A673 (cell line): ENCODE measurements at regions of chr11 and their contacts with region 1.

Region 1: GRCh38 chr11:101323997-101324396 is 194.4 kb upstream of the PGR start:
- DNase-seq: peak; percentile 9
- H3K4me3 ChIP-seq: no peak overlapping the region
- H3K27ac ChIP-seq: no peak overlapping the region
- H3K4me1 ChIP-seq: no peaks in the 10 kb centered on the region
- H3K27me3 ChIP-seq: no peaks in the 10 kb centered on the region
- CTCF ChIP-seq: peak; percentile 37; the same call in 1 of the 2 replicates

Region 2: GRCh38 chr11:100980156-100980555 is 343.8 kb before region 1 on chr11:
- CTCF ChIA-PET with region 1: interaction called, 4 read pairs
- POLR2A ChIA-PET with region 1: no interaction called
- intact Hi-C with region 1: loop called (anchors 10 kb)
- DNase-seq: peak; percentile 34
- H3K4me3 ChIP-seq: no peak overlapping the region
- H3K27ac ChIP-seq: no peak overlapping the region
- H3K4me1 ChIP-seq: no peaks in the 10 kb centered on the region
- H3K27me3 ChIP-seq: no peaks in the 10 kb centered on the region
- CTCF ChIP-seq: peak; percentile 58

Region 3: DNA sequence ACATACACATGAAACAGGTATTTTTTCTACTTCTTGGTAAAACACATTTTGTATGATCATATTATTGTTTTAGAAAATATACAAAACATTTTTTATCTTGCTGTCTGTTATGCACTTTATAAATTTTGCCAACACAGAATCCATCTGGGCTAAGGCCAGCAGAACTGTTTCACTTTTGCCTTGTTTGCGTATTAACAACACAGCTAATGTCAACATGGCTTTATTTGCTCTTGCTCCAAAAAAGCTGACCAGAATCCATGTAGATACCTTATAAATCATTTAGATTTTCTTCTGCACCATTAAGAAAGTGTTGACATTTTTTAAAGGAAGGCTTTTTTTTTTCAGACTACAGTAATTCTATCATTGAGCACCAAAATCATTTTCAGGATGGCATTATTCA is 136.2 kb before region 1 on chr11:
- CTCF ChIA-PET with region 1: no interaction called
- POLR2A ChIA-PET with region 1: no interaction called
- intact Hi-C with region 1: no loop called
- DNase-seq: no peak
- H3K4me3 ChIP-seq: no peak overlapping the region
- H3K27ac ChIP-seq: no peak overlapping the region
- H3K4me1 ChIP-seq: no peaks in the 10 kb centered on the region
- H3K27me3 ChIP-seq: no peaks in the 10 kb centered on the region
- CTCF ChIP-seq: no peak

Region 4: DNA sequence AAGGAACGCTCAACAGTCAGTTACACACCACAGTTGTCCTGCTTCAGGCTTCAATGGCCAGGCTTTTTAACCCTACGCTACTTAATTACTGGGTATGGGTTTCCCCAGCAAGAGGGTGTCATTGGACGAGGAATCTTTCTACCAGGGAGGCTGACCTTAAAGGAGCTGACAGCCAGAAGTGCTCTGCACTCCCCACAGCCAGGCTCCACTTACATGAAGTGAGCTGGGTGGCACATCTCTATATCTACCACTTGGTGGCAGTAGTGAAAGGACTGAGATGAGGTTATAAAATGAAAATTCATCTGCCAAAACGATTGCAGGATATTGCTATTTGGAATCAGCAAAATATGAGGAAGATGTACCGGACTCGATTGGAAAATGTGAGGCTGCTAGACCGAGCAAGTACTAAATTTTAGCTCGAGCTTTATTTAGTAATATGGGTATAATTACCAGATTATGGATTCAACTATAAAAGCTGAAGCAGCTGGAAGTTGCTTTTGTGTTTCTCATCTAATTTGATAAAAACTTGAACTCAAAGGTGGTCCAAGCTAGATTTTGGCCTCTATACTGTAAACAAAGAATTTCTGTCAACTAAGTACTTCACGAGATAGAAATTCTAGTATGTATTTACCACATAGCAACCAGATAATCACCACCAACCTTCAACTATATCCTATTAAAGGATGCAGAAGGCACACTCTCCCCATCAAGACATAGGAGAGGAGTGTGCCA is 536.9 kb after region 1 on chr11:
- CTCF ChIA-PET with region 1: no interaction called
- POLR2A ChIA-PET with region 1: no interaction called
- intact Hi-C with region 1: no loop called
- DNase-seq: peak; percentile 74
- H3K4me3 ChIP-seq: no peak overlapping the region
- H3K27ac ChIP-seq: no peak overlapping the region
- H3K4me1 ChIP-seq: peaks cover 10% of the 10 kb centered on the region
- H3K27me3 ChIP-seq: no peaks in the 10 kb centered on the region
- CTCF ChIP-seq: peak; percentile 88